ENCODE measurements at regions of chr6 and their contacts with region 1.

Region 1: DNA sequence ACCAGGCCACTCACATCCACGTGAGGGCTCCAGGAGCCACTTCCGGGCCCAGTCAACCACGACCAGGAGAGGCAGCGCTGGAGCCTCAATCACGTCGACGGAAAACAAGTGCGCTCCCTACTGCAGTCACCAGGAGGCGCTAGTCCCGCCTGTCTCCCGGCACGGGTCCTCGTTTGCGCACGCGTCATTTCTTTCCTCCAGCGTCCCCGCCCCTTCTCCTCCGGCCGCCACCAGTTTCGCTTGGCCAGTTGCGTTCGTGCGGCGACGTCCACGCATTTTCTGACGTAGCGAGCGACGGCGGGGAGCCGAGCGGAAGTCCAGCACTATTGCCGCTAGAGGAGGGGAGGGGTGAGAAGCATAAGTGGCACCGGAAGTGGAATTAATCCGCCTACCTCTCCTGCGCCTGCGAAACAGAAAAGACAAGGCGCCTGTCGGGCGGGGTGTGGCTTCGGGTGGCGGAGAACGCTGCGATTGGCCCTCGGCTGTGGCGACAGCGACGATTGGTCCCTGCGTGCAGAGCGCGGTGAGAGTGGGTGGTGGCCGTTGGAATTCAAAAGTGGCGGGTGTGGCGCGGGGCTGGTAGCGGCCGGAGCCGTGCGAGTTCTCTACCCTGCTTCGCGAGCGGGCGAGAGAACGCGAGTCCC is at the start of gene KIFC1:
- DNase-seq: peak; percentile 98 to 100 (median 99)
- ATAC-seq: peak; percentile 86
- H3K4me3 ChIP-seq: peak within 1 kb of the TSS; percentile 65
- H3K4me3 Mint-ChIP-seq: peak within 1 kb of the TSS; percentile 87
- H3K27ac ChIP-seq: peak within 1 kb of the TSS; percentile 69 to 78
- H3K27ac Mint-ChIP-seq: peak within 1 kb of the TSS; percentile 91
- H3K4me1 ChIP-seq: peaks cover 25% of the 10 kb centered on the region
- H3K4me1 Mint-ChIP-seq: peaks cover 23% of the 10 kb centered on the region
- H3K27me3 ChIP-seq: no peaks in the 10 kb centered on the region
- H3K27me3 Mint-ChIP-seq: no peaks in the 10 kb centered on the region
- CTCF ChIP-seq: peak; percentile 99
- total RNA-seq, gene KIFC1: 1.2 to 1.6 TPM

Region 2: GRCh38 chr6:33161354-33162331 is 229.8 kb before region 1 on chr6:
- CTCF ChIA-PET with region 1: no interaction called
- POLR2A ChIA-PET with region 1: no interaction called
- intact Hi-C with region 1: no loop called
- DNase-seq: peak; percentile 64 to 89 (median 80)
- ATAC-seq: peak; percentile 97
- H3K4me3 ChIP-seq: peak overlapping the region; percentile 46
- H3K4me3 Mint-ChIP-seq: peak overlapping the region; percentile 87
- H3K27ac ChIP-seq: no peak overlapping the region
- H3K27ac Mint-ChIP-seq: no peak overlapping the region
- H3K4me1 ChIP-seq: peaks cover 16% of the 10 kb centered on the region
- H3K4me1 Mint-ChIP-seq: peaks cover 10% of the 10 kb centered on the region
- H3K27me3 ChIP-seq: no peaks in the 10 kb centered on the region
- H3K27me3 Mint-ChIP-seq: no peaks in the 10 kb centered on the region
- CTCF ChIP-seq: peak; percentile 90

Region 3: DNA sequence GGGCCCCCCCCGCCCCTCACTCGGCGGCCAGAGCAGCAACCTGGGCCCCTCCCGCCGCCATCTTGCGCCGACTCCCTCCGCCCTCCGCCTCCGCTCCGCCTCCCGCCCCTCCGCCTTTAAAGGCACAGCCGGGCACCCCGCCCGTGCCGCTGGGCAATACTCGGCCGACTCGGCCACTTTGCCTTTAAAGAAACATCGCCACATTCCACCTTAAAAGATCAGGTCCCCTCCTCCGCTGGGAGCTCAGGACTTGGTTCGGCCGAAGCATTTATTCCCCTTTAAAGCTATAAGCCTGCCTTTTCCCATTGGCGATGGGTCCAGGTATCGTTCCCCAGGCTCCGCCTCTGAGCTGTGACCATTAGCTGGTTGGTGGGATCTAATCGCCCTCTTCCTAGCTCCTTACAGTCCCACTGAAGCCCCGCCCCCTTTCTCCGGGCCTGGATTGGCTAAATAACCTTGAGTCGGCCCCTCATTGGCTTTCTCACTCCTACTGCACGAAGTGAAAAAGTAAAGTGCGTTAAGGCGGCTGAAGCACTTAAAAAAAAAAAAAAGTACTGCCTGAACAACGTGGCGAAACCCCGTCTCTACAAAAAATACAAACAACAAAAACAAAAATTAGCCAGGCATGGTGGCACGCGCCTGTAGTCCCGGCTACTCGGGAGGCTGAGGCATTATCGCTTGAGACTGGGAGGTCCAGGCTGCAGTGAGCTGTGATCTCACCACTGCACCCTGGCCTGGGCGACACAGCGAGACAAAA is 73.6 kb before region 1 on chr6 and contains the start of gene ZBTB22:
- CTCF ChIA-PET with region 1: interaction called, 12 read pairs
- POLR2A ChIA-PET with region 1: interaction called, 12 read pairs
- intact Hi-C with region 1: loop called (anchors 1 kb)
- DNase-seq: peak; percentile 90 to 98 (median 95)
- ATAC-seq: peak; percentile 64
- H3K4me3 ChIP-seq: peak within 1 kb of the TSS; percentile 67
- H3K4me3 Mint-ChIP-seq: peak within 1 kb of the TSS; percentile 100
- H3K27ac ChIP-seq: peak within 1 kb of the TSS; percentile 81 to 86
- H3K27ac Mint-ChIP-seq: peak within 1 kb of the TSS; percentile 94
- H3K4me1 ChIP-seq: peaks cover 75% of the 10 kb centered on the region
- H3K4me1 Mint-ChIP-seq: peaks cover 95% of the 10 kb centered on the region
- H3K27me3 ChIP-seq: no peaks in the 10 kb centered on the region
- H3K27me3 Mint-ChIP-seq: no peaks in the 10 kb centered on the region
- CTCF ChIP-seq: no peak
- total RNA-seq, gene ZBTB22: 11.6 to 13.6 TPM

Region 4: GRCh38 chr6:33410050-33410710 is 18.8 kb after region 1 on chr6:
- CTCF ChIA-PET with region 1: interaction called, 8 read pairs
- POLR2A ChIA-PET with region 1: interaction called, 3 read pairs
- intact Hi-C with region 1: loop called (anchors 1 kb)
- DNase-seq: peak; percentile 92 to 99 (median 98)
- ATAC-seq: peak; percentile 71
- H3K4me3 ChIP-seq: peak overlapping the region; percentile 81
- H3K4me3 Mint-ChIP-seq: peak overlapping the region; percentile 95
- H3K27ac ChIP-seq: peak overlapping the region; percentile 95 to 99
- H3K27ac Mint-ChIP-seq: peak overlapping the region; percentile 98
- H3K4me1 ChIP-seq: peaks cover 64% of the 10 kb centered on the region
- H3K4me1 Mint-ChIP-seq: peaks cover 57% of the 10 kb centered on the region
- H3K27me3 ChIP-seq: no peaks in the 10 kb centered on the region
- H3K27me3 Mint-ChIP-seq: no peaks in the 10 kb centered on the region
- CTCF ChIP-seq: no peak

Region 5: GRCh38 chr6:33425668-33426577 is 34.5 kb after region 1 on chr6:
- CTCF ChIA-PET with region 1: interaction called, 25 read pairs
- POLR2A ChIA-PET with region 1: interaction called, 14 read pairs
- intact Hi-C with region 1: loop called (anchors 1 kb)
- DNase-seq: peak; percentile 65 to 91 (median 80)
- ATAC-seq: peak; percentile 48
- H3K4me3 ChIP-seq: peak overlapping the region; percentile 71
- H3K4me3 Mint-ChIP-seq: peak overlapping the region; percentile 94
- H3K27ac ChIP-seq: peak overlapping the region; percentile 86 to 92
- H3K27ac Mint-ChIP-seq: peak overlapping the region; percentile 99
- H3K4me1 ChIP-seq: peaks cover 60% of the 10 kb centered on the region
- H3K4me1 Mint-ChIP-seq: peaks cover 80% of the 10 kb centered on the region
- H3K27me3 ChIP-seq: no peaks in the 10 kb centered on the region
- H3K27me3 Mint-ChIP-seq: no peaks in the 10 kb centered on the region
- CTCF ChIP-seq: peak; percentile 65

Region 6: GRCh38 chr6:33535104-33535603 is 143.8 kb after region 1 on chr6:
- CTCF ChIA-PET with region 1: no interaction called
- POLR2A ChIA-PET with region 1: no interaction called
- intact Hi-C with region 1: loop called in 1 of 2 experiments (anchors 5 kb)
- DNase-seq: no peak
- ATAC-seq: no peak
- H3K4me3 ChIP-seq: no peak overlapping the region
- H3K4me3 Mint-ChIP-seq: no peak overlapping the region
- H3K27ac ChIP-seq: no peak overlapping the region
- H3K27ac Mint-ChIP-seq: peak overlapping the region; percentile 18
- H3K4me1 ChIP-seq: peaks cover 17% of the 10 kb centered on the region
- H3K4me1 Mint-ChIP-seq: peaks cover 18% of the 10 kb centered on the region
- H3K27me3 ChIP-seq: no peaks in the 10 kb centered on the region
- H3K27me3 Mint-ChIP-seq: no peaks in the 10 kb centered on the region
- CTCF ChIP-seq: no peak

Region 7: DNA sequence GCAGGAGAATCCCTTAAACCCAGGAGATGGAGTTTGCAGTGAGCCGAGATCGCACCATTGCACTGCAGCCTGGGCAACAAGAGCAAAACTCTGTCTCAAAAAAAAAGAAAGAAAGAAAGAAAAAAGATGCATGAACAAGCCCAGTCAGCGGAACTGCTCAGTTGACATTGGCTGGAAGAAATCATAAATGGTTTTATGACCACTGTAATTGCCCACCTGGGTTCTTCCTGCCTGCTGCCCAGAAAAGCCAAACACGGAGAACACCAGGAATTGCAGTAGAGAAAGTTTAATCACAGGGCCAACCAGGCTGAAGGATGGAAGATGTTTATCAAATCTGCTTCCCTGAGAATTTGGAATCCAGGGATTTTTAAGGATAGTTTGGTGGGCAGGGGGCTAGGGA is 166.0 kb after region 1 on chr6:
- CTCF ChIA-PET with region 1: no interaction called
- POLR2A ChIA-PET with region 1: no interaction called
- intact Hi-C with region 1: no loop called
- DNase-seq: no peak
- ATAC-seq: no peak
- H3K4me3 ChIP-seq: no peak overlapping the region
- H3K4me3 Mint-ChIP-seq: no peak overlapping the region
- H3K27ac ChIP-seq: no peak overlapping the region
- H3K27ac Mint-ChIP-seq: no peak overlapping the region
- H3K4me1 ChIP-seq: no peaks in the 10 kb centered on the region
- H3K4me1 Mint-ChIP-seq: no peaks in the 10 kb centered on the region
- H3K27me3 ChIP-seq: no peaks in the 10 kb centered on the region
- H3K27me3 Mint-ChIP-seq: no peaks in the 10 kb centered on the region
- CTCF ChIP-seq: no peak